Activated T-helper 1 cell treated with anti-CD3 and anti-CD28 coated beads, Interleukin-12 subunit alpha, Interleukin-12 subunit beta, Interleukin-2, Interleukin-4 antibody, amounts not matched to agents 30 ng/mL and 10 ng/mL and 1 ng/mL, durations not matched to agents 14 hours and 24 hours and 36 hours (primary cell): ENCODE measurements at regions of chr3 and their contacts with region 1.

Region 1: GRCh38 chr3:47164007-47164881 is at the start of gene SETD2:
- DNase-seq: peak; percentile 75
- H3K4me3 Mint-ChIP-seq: peak within 1 kb of the TSS; percentile 99
- H3K27ac Mint-ChIP-seq: peak within 1 kb of the TSS; percentile 100
- H3K4me1 Mint-ChIP-seq: peaks cover 53% of the 10 kb centered on the region
- H3K27me3 Mint-ChIP-seq: peaks cover 2% of the 10 kb centered on the region
- total RNA-seq, gene SETD2: 41.2 and 45.7 TPM in 2 replicates

Region 2: DNA sequence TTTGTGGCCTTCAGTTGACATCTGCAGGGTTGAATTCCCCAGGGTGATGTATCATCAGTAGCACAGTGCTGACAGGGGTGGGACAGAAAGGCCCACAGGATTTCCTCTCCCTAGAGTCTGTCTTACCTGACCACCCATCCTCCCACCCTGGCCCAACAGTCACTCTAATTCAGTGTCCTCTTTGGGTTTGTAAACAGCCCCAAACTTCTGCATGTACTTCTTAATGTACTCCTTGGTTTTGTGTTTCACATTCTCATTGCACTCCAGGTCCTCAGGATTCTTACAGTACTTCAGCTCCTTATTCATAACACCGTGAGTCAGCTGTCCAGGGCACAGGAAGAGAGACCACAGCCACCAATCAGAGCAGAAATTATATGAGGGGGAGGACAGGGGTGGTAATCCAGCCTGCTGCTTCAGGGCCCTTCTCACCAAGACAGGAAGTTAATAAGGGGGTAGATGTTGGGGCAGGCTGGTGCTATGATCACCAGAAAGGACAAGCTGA is 147.3 kb before region 1 on chr3:
- intact Hi-C with region 1: loop called (anchors 2 kb)
- DNase-seq: no peak
- H3K4me3 Mint-ChIP-seq: peak overlapping the region; percentile 59
- H3K27ac Mint-ChIP-seq: peak overlapping the region; percentile 87
- H3K4me1 Mint-ChIP-seq: peaks cover 57% of the 10 kb centered on the region
- H3K27me3 Mint-ChIP-seq: no peaks in the 10 kb centered on the region

Region 3: GRCh38 chr3:47082519-47082918 is 81.7 kb before region 1 on chr3:
- intact Hi-C with region 1: loop called (anchors 5 kb)
- DNase-seq: no peak
- H3K4me3 Mint-ChIP-seq: no peak overlapping the region
- H3K27ac Mint-ChIP-seq: no peak overlapping the region
- H3K4me1 Mint-ChIP-seq: peaks cover 33% of the 10 kb centered on the region
- H3K27me3 Mint-ChIP-seq: no peaks in the 10 kb centered on the region

Region 4: DNA sequence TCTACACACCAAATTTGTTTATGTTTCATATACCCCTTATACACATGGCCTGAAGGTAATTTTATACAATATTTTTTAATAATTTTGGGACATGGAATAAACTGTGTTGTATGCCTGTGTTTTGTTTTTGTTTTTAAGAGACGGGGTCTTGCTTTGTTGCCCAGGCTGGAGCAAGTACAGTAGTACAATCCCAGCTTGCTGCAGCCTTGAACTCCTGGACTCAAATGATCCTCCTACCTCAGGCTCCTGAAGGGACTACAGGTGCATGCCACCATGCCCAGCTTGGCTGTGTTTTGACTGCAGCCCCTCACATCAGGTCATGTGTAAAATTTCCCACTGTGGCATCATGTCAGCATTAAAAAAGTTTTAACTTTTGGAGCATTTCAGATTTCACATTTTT is 19.0 kb before region 1 on chr3:
- intact Hi-C with region 1: loop called (anchors 1 kb)
- DNase-seq: no peak
- H3K4me3 Mint-ChIP-seq: no peak overlapping the region
- H3K27ac Mint-ChIP-seq: no peak overlapping the region
- H3K4me1 Mint-ChIP-seq: peaks cover 20% of the 10 kb centered on the region
- H3K27me3 Mint-ChIP-seq: no peaks in the 10 kb centered on the region

Region 5: DNA sequence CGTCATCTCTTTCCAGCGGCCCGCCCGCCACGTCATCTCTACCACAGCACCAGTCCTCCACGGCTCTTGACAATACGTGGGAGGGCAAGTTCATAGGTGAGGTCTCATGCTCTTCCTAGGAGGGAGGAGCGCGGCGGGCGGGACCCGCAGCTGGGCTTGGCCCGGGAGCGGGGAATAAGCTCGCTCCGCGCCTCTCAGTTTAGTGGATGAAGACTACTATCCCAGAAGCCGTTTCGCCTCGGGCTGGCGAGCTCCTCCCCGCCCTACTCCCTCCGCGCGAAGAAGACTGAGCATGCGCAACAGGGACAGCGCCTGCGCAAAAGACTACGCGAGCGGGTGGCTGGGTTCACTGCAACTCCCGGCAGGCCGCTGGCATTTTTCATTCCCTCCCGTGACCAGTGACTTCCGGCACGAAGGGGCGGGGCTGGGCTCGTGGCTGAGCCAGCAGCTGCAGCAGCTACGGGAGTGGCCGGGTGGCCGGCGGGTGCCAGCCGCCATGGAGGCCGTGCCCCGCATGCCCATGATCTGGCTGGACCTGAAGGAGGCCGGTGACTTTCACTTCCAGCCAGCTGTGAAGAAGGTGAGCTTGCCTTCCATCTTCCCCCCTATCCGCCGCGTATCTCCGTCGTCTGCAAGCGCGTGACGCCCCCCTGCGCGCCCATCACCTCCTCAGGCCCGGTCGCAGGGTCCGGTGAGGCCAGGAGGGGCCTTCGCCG is 216.5 kb after region 1 on chr3 and contains the start of gene PTPN23:
- intact Hi-C with region 1: loop called (anchors 1 kb)
- DNase-seq: peak; percentile 99
- H3K4me3 Mint-ChIP-seq: peak within 1 kb of the TSS; percentile 100
- H3K27ac Mint-ChIP-seq: peak within 1 kb of the TSS; percentile 100
- H3K4me1 Mint-ChIP-seq: peaks cover 43% of the 10 kb centered on the region
- H3K27me3 Mint-ChIP-seq: no peaks in the 10 kb centered on the region
- total RNA-seq, gene PTPN23: 33.7 and 35.1 TPM in 2 replicates